Natural killer cell (primary cell): ENCODE measurements at regions of chr12 and their contacts with region 1.

Region 1: GRCh38 chr12:92784795-92785562 is 82.2 kb downstream of the PLEKHG7 start:
- DNase-seq: peak in 1 of 2 donors; percentile 80
- ATAC-seq: peak; percentile 89 to 99 (median 98)
- H3K4me3 ChIP-seq: no peak overlapping the region
- H3K4me3 Mint-ChIP-seq: no peak overlapping the region
- H3K27ac ChIP-seq: no peak overlapping the region
- H3K27ac Mint-ChIP-seq: no peak overlapping the region
- H3K4me1 ChIP-seq: no peaks in the 10 kb centered on the region
- H3K4me1 Mint-ChIP-seq: peaks cover 0 to 8% of the 10 kb centered on the region in 2 donors
- H3K27me3 ChIP-seq: no peaks in the 10 kb centered on the region
- H3K27me3 Mint-ChIP-seq: no peaks in the 10 kb centered on the region
- CTCF ChIP-seq: peak; percentile 62

Region 2: DNA sequence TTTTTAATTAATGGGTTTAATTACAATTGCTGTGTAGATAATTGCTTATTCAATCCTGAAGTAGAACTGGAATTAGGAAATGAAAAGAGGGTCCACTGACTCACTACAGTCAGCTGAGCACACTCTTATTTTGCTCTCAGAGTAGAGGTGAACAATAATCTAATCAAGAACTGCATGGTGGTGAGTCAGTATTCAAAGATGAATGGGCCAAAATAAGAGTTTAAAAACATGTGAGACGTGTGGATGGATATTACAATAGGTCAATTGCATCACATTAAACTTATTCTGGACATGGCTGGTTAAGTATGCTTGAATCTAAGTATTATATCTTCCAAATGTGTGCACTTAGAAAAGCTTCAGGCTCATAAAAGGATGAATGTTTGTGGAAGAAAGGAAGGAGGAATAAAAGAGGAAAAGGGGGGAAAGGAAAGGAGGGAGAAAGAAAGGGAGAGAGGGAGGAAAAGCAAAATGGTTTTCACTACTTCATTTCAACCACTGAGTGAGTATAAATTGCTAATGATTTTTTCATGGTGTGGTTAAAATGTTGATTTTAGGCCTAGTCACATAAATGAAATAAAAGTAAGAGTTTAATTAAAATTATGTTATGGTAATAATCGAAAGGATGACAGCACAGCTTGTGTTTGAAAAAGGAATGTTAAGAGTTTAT is 171.2 kb after region 1 on chr12:
- intact Hi-C with region 1: no loop called
- DNase-seq: no peak
- ATAC-seq: no peak
- H3K4me3 ChIP-seq: no peak overlapping the region
- H3K4me3 Mint-ChIP-seq: no peak overlapping the region
- H3K27ac ChIP-seq: no peak overlapping the region
- H3K27ac Mint-ChIP-seq: no peak overlapping the region
- H3K4me1 ChIP-seq: no peaks in the 10 kb centered on the region
- H3K4me1 Mint-ChIP-seq: no peaks in the 10 kb centered on the region
- H3K27me3 ChIP-seq: no peaks in the 10 kb centered on the region
- H3K27me3 Mint-ChIP-seq: no peaks in the 10 kb centered on the region
- CTCF ChIP-seq: no peak

Region 3: DNA sequence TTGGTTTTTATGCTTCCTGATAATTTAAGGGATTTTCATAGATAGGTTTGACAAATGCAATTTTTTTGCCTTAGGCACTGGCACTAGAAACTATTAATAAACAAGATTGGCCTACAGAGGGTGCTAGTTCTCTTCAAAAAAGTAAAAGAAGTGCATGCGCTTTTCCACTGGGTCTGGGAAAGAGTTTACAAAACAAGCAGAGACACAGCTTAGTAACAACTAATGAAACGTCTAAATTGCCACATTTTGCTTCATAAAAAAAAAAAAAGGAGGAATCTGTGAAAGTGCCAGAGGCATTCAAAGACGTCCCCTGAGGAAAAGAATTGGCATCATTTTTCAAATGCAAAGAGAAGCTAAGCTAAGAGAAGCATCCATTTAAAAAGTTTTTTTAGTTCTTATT is 202.4 kb after region 1 on chr12:
- intact Hi-C with region 1: loop called (anchors 10 kb)
- DNase-seq: peak in 1 of 2 donors; percentile 72
- ATAC-seq: peak; percentile 47 to 69 (median 61)
- H3K4me3 ChIP-seq: no peak overlapping the region
- H3K4me3 Mint-ChIP-seq: no peak overlapping the region
- H3K27ac ChIP-seq: no peak overlapping the region
- H3K27ac Mint-ChIP-seq: no peak overlapping the region
- H3K4me1 ChIP-seq: peaks cover 5% of the 10 kb centered on the region
- H3K4me1 Mint-ChIP-seq: peaks cover 0 to 4% of the 10 kb centered on the region in 2 donors
- H3K27me3 ChIP-seq: no peaks in the 10 kb centered on the region
- H3K27me3 Mint-ChIP-seq: peaks cover 6 to 16% of the 10 kb centered on the region in 2 donors
- CTCF ChIP-seq: peak; percentile 52

Region 4: GRCh38 chr12:93397412-93397811 is 612.4 kb after region 1 on chr12:
- intact Hi-C with region 1: loop called (anchors 2 kb)
- DNase-seq: no peak
- ATAC-seq: no peak
- H3K4me3 ChIP-seq: no peak overlapping the region
- H3K4me3 Mint-ChIP-seq: no peak overlapping the region
- H3K27ac ChIP-seq: no peak overlapping the region
- H3K27ac Mint-ChIP-seq: no peak overlapping the region
- H3K4me1 ChIP-seq: no peaks in the 10 kb centered on the region
- H3K4me1 Mint-ChIP-seq: no peaks in the 10 kb centered on the region
- H3K27me3 ChIP-seq: no peaks in the 10 kb centered on the region
- H3K27me3 Mint-ChIP-seq: no peaks in the 10 kb centered on the region
- CTCF ChIP-seq: no peak

Region 5: GRCh38 chr12:93419388-93420034 is 634.5 kb after region 1 on chr12:
- intact Hi-C with region 1: loop called (anchors 1 kb)
- DNase-seq: peak in 1 of 2 donors; percentile 73
- ATAC-seq: peak; percentile 80 to 85 (median 83)
- H3K4me3 ChIP-seq: no peak overlapping the region
- H3K4me3 Mint-ChIP-seq: no peak overlapping the region
- H3K27ac ChIP-seq: no peak overlapping the region
- H3K27ac Mint-ChIP-seq: peak overlapping the region; percentile 8 to 54
- H3K4me1 ChIP-seq: peaks cover 6% of the 10 kb centered on the region
- H3K4me1 Mint-ChIP-seq: peaks cover 68 to 75% of the 10 kb centered on the region in 2 donors
- H3K27me3 ChIP-seq: no peaks in the 10 kb centered on the region
- H3K27me3 Mint-ChIP-seq: no peaks in the 10 kb centered on the region
- CTCF ChIP-seq: peak; percentile 72